Adrenal gland (tissue), 19 donors: ENCODE measurements at regions of chr1 and their contacts with region 1.

Region 1: GRCh38 chr1:17419626-17420328 is 19.7 kb downstream of the RCC2 start:
- DNase-seq: peak; percentile 37 to 85 (median 73)
- H3K4me3 ChIP-seq: no peak overlapping the region
- H3K27ac ChIP-seq: no peak overlapping the region
- H3K4me1 ChIP-seq: no peaks in the 10 kb centered on the region
- H3K27me3 ChIP-seq: no peaks in the 10 kb centered on the region
- CTCF ChIP-seq: peak; percentile 92 to 99 (median 96)
- POLR2A ChIP-seq: no peak

Region 2: GRCh38 chr1:17485280-17485679 is 65.5 kb after region 1 on chr1:
- intact Hi-C with region 1: loop called (anchors 5 to 10 kb)
- DNase-seq: peak in 3 of 7 donors; percentile 27 to 41 (median 33)
- H3K4me3 ChIP-seq: no peak overlapping the region
- H3K27ac ChIP-seq: no peak overlapping the region
- H3K4me1 ChIP-seq: no peaks in the 10 kb centered on the region
- H3K27me3 ChIP-seq: no peaks in the 10 kb centered on the region
- CTCF ChIP-seq: peak in 5 of 6 experiments; percentile 13 to 51 (median 38)
- POLR2A ChIP-seq: no peak

Region 3: GRCh38 chr1:17617787-17618557 is 198.2 kb after region 1 on chr1:
- intact Hi-C with region 1: loop called in 1 of 2 experiments (anchors 10 kb)
- DNase-seq: peak in 5 of 7 donors; percentile 41 to 52 (median 46)
- H3K4me3 ChIP-seq: peak overlapping the region in 1 of 4 donors; percentile 27
- H3K27ac ChIP-seq: peak overlapping the region in 4 of 5 donors; percentile 19 to 89 (median 44)
- H3K4me1 ChIP-seq: no peaks in the 10 kb centered on the region
- H3K27me3 ChIP-seq: no peaks in the 10 kb centered on the region
- CTCF ChIP-seq: no peak
- POLR2A ChIP-seq: peak in 1 of 2 donors; percentile 7